CD14-positive monocyte (primary cell): ENCODE measurements at regions of chr12 and their contacts with region 1.

Region 1: DNA sequence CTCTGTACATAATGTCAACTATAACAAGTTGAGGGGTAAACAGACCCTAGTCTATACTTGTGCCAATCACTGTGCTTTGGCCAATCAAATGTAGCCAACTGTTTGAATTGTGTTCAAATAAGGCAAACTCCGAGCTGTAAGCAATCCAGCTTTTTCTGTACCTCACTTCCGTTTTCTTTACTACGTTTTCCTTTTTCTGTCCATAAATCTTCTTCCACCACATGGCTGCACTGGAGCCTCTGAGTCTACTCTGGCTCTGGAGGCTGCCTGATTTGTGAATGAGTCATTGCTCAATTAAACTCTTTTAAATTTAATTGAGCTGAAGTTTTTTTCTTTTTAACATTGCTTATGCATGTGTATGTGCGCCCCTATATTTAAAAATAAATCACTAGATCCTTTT is 29.7 kb downstream of the CLEC1A start:
- DNase-seq: peak; percentile 71 to 82 (median 81)
- H3K4me3 ChIP-seq: peak overlapping the region; percentile 17 to 55 (median 29)
- H3K4me3 Mint-ChIP-seq: peak overlapping the region; percentile 32 to 81
- H3K27ac ChIP-seq: peak overlapping the region; percentile 63 to 95
- H3K27ac Mint-ChIP-seq: peak overlapping the region; percentile 96 to 99 (median 97)
- H3K4me1 ChIP-seq: peaks cover 43 to 48% of the 10 kb centered on the region in 2 donors
- H3K4me1 Mint-ChIP-seq: peaks cover 54% of the 10 kb centered on the region
- H3K27me3 ChIP-seq: no peaks in the 10 kb centered on the region
- H3K27me3 Mint-ChIP-seq: peaks cover 0 to 2% (median 0%) of the 10 kb centered on the region in 3 donors
- CTCF ChIP-seq: no peak

Region 2: DNA sequence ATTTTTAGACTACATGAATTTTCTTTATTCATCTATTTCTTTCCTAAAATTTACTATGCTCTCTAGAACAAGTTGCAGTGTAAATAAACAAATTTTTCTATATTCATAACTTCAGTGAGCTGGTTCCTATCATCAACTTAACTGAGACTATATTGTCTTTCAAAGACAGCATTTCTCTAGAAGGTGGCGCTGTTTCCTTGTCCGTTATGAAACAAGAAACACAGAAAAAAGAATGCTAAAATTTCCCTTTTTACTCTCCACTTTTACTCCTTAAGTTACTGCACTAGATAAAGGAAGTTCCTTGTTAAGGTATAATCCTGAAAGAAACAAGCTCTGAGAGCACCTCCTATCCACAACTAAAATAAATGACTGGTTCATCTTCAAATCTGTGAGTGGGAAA is 128.7 kb before region 1 on chr12:
- intact Hi-C with region 1: no loop called
- DNase-seq: peak in 2 of 3 donors; percentile 50 to 59
- H3K4me3 ChIP-seq: no peak overlapping the region
- H3K4me3 Mint-ChIP-seq: peak overlapping the region in 1 of 2 donors; percentile 69
- H3K27ac ChIP-seq: peak overlapping the region in 1 of 2 donors; percentile 45
- H3K27ac Mint-ChIP-seq: peak overlapping the region in 4 of 7 donors; percentile 39 to 88 (median 82)
- H3K4me1 ChIP-seq: peaks cover 14 to 49% of the 10 kb centered on the region in 2 donors
- H3K4me1 Mint-ChIP-seq: peaks cover 56% of the 10 kb centered on the region
- H3K27me3 ChIP-seq: no peaks in the 10 kb centered on the region
- H3K27me3 Mint-ChIP-seq: peaks cover 0 to 3% (median under 1%) of the 10 kb centered on the region in 3 donors
- CTCF ChIP-seq: peak; percentile 77

Region 3: GRCh38 chr12:10130042-10130441 is 60.9 kb after region 1 on chr12 and contains the start of gene CLEC7A:
- intact Hi-C with region 1: loop called (anchors 5 to 10 kb)
- DNase-seq: peak; percentile 83 to 96 (median 93)
- H3K4me3 ChIP-seq: peak within 1 kb of the TSS; percentile 85 to 100 (median 89)
- H3K4me3 Mint-ChIP-seq: peak within 1 kb of the TSS; percentile 94 to 95
- H3K27ac ChIP-seq: peak within 1 kb of the TSS; percentile 95 to 97
- H3K27ac Mint-ChIP-seq: peak within 1 kb of the TSS; percentile 97 to 99 (median 98)
- H3K4me1 ChIP-seq: peaks cover 51 to 64% of the 10 kb centered on the region in 2 donors
- H3K4me1 Mint-ChIP-seq: peaks cover 52% of the 10 kb centered on the region
- H3K27me3 ChIP-seq: no peaks in the 10 kb centered on the region
- H3K27me3 Mint-ChIP-seq: no peaks in the 10 kb centered on the region
- CTCF ChIP-seq: no peak
- polyA plus RNA-seq, gene CLEC7A: 235 to 809 (median 304) TPM

Region 4: DNA sequence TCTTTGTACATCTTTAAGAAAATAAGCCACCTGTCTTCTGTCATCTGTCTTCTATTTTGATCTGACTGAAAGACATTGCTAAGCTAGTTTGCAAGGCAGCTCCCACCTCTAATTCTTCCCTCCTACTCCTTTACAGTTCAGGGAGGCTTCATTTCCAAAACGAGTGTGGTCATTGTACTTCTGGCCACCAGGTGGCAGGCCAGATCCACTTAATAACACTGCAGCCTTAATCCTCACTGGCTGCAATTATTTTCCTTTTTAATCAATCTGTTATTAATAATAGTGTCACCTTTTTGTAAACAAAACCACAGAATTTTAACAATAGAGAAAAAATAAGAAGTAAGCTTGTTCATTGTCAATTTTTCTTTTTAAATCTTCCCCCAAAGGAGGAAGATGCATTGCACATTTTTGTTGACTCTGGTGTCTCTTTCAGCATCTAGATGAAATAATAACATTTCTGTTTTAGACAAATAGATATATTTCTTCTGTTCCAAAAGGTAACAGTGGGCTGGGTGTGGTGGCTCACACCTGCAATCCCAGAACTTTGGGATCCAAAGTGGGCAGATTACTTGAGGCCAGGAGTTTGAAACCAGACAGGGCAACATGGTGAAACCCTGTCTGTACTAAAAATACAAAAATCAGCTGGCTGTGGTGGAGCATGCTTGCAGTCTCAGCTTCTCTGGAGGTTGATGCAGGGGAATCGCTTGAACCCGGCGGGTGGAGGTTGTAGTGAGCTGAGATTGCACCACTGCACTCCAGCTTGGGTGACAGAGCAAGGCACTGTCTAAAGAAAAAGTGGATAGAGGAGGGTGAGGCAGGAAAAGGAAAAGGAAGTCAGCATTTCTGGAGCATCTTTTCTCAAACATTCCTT is 166.9 kb after region 1 on chr12:
- intact Hi-C with region 1: no loop called
- DNase-seq: peak; percentile 36 to 62 (median 52)
- H3K4me3 ChIP-seq: no peak overlapping the region
- H3K4me3 Mint-ChIP-seq: no peak overlapping the region
- H3K27ac ChIP-seq: no peak overlapping the region
- H3K27ac Mint-ChIP-seq: peak overlapping the region in 1 of 7 donors; percentile 3
- H3K4me1 ChIP-seq: no peaks in the 10 kb centered on the region
- H3K4me1 Mint-ChIP-seq: peaks cover 3% of the 10 kb centered on the region
- H3K27me3 ChIP-seq: no peaks in the 10 kb centered on the region
- H3K27me3 Mint-ChIP-seq: peaks cover 0 to 7% (median 3%) of the 10 kb centered on the region in 3 donors
- CTCF ChIP-seq: peak; percentile 93